CD4-positive, alpha-beta memory T cell (primary cell): ENCODE measurements at regions of chr12 and their contacts with region 1.

Region 1: DNA sequence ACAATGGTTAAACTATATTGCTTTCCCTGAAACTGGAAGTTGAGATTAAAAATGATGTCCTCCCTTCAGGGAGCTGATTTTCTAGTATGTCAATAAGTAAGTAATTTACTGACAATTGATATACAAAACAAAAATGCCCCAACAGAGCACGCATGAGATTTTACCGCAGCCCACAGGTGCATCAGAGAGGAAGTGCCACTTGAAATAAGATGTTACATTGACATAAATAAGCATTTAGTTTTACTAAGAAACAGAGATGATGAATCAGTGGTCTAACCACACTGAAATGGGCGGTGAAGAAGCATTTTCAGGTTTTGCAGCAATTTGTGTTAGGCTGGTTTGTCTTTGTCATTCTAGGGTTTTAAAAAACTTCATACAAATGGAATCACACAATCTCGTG is 8.8 kb upstream of the CLECL1 start:
- DNase-seq: peak; percentile 85 to 94 (median 91)
- H3K4me3 ChIP-seq: peak overlapping the region in 1 of 2 donors; percentile 38
- H3K4me3 Mint-ChIP-seq: peak overlapping the region; percentile 66 to 92 (median 84)
- H3K27ac ChIP-seq: peak overlapping the region; percentile 62
- H3K27ac Mint-ChIP-seq: peak overlapping the region; percentile 81 to 100 (median 99)
- H3K4me1 ChIP-seq: peaks cover 68% of the 10 kb centered on the region
- H3K4me1 Mint-ChIP-seq: peaks cover 50 to 69% (median 59%) of the 10 kb centered on the region in 4 donors
- H3K27me3 ChIP-seq: no peaks in the 10 kb centered on the region
- H3K27me3 Mint-ChIP-seq: no peaks in the 10 kb centered on the region

Region 2: DNA sequence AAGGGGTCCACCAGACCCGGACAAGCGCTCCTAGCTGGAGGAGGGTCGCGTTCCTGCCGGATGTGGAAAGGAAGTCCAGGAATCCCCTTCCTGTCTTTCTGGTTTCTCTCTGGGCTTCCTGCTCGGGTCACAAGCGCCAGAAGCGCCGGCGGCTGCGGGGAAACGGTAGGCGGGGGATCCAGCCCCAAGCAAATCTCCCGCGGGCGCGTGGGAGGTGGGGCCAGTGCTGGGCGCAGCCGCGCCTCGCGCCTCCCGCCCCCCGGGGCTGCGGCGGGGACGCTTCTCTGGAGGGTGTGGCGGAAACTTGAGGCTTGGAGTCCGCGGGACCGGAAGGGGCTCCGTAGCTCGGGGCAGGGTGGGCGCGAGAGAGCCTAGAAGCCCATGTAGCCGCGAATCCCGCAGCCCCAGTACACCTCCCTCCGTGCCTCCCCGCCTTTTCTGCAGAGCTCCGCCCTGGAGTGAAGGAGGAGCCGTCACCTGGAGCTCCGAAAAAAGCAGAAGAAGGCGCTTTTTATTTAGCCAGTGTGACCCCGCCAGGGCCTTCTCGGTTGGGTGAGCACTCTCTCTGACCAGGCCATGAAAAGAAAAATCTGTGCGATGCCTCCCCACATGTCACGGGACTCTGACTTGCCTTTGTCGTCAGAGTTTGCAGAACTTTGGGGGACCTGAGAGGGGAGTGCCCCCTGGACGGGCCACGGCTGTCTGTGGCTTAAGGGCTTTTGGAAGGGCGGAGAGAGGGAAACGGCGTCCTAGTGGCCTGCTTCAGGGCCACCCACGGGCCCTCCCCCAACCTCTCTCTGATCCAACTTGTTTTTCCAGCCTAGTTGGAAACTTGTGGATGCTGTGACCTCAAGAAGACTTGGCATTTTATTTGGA is 93.7 kb before region 1 on chr12:
- CTCF ChIA-PET with region 1: interaction called, 25 read pairs
- POLR2A ChIA-PET with region 1: interaction called, 84 read pairs
- intact Hi-C with region 1: loop called (anchors 1 kb)
- DNase-seq: peak; percentile 94 to 96 (median 94)
- H3K4me3 ChIP-seq: peak overlapping the region; percentile 91 to 99
- H3K4me3 Mint-ChIP-seq: peak overlapping the region; percentile 94 to 100 (median 99)
- H3K27ac ChIP-seq: peak overlapping the region; percentile 83
- H3K27ac Mint-ChIP-seq: peak overlapping the region; percentile 85 to 99 (median 97)
- H3K4me1 ChIP-seq: peaks cover 62% of the 10 kb centered on the region
- H3K4me1 Mint-ChIP-seq: peaks cover 39 to 66% (median 50%) of the 10 kb centered on the region in 4 donors
- H3K27me3 ChIP-seq: no peaks in the 10 kb centered on the region
- H3K27me3 Mint-ChIP-seq: no peaks in the 10 kb centered on the region

Region 3: GRCh38 chr12:9702255-9702654 is 39.5 kb before region 1 on chr12:
- CTCF ChIA-PET with region 1: interaction called, 7 read pairs
- POLR2A ChIA-PET with region 1: interaction called, 39 read pairs
- intact Hi-C with region 1: no loop called
- DNase-seq: peak; percentile 54 to 74 (median 66)
- H3K4me3 ChIP-seq: peak overlapping the region; percentile 4 to 12
- H3K4me3 Mint-ChIP-seq: peak overlapping the region; percentile 35 to 81 (median 75)
- H3K27ac ChIP-seq: peak overlapping the region; percentile 58
- H3K27ac Mint-ChIP-seq: peak overlapping the region; percentile 85 to 97 (median 93)
- H3K4me1 ChIP-seq: peaks cover 77% of the 10 kb centered on the region
- H3K4me1 Mint-ChIP-seq: peaks cover 67 to 84% (median 73%) of the 10 kb centered on the region in 4 donors
- H3K27me3 ChIP-seq: no peaks in the 10 kb centered on the region
- H3K27me3 Mint-ChIP-seq: no peaks in the 10 kb centered on the region

Region 4: DNA sequence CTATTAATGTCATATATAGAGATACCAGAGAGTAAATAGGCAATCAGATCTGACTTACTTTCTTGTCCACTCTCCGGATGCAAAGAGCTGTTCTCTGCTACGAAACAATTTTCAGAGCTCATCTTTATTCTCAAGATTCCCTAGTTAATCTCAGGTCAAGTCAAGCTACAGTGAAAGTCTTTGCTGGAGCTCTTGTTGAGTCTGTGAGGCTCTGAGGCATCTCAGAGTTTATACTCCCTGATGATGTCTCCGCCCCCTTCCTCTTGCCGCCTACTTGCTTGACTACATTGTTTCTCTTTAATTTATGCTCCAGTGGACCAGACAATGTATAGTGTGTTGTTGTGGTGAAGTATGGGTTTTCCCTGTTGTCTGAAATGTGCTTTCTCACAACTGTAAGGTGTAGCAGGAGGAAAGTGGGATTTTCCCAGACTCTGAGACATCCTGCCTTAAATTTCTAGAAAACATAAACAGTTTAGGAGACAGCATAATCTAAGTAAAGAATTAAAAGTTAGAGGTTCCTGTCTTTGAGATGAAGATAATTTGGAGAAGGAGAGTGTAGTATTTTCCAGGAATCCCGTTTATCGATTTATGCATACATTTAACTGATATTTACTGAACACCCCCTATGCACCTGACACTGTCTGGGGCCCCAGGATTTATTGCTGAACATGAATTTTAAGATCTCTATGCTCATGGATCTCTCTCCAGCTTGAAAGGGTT is 19.1 kb after region 1 on chr12 and contains the start of gene CD69:
- CTCF ChIA-PET with region 1: interaction called, 157 read pairs
- POLR2A ChIA-PET with region 1: interaction called, 189 read pairs
- intact Hi-C with region 1: loop called (anchors 1 kb)
- DNase-seq: peak; percentile 87 to 93 (median 90)
- H3K4me3 ChIP-seq: peak within 1 kb of the TSS; percentile 71 to 80
- H3K4me3 Mint-ChIP-seq: peak within 1 kb of the TSS; percentile 87 to 100 (median 98)
- H3K27ac ChIP-seq: peak within 1 kb of the TSS; percentile 98
- H3K27ac Mint-ChIP-seq: peak within 1 kb of the TSS; percentile 98 to 100 (median 100)
- H3K4me1 ChIP-seq: peaks cover 59% of the 10 kb centered on the region
- H3K4me1 Mint-ChIP-seq: peaks cover 42 to 70% (median 51%) of the 10 kb centered on the region in 4 donors
- H3K27me3 ChIP-seq: no peaks in the 10 kb centered on the region
- H3K27me3 Mint-ChIP-seq: no peaks in the 10 kb centered on the region
- total RNA-seq, gene CD69: 31.0 to 35.9 TPM

Region 5: GRCh38 chr12:9869307-9870161 is 127.8 kb after region 1 on chr12 and contains the start of gene CLEC2B:
- CTCF ChIA-PET with region 1: interaction called, 3 read pairs
- POLR2A ChIA-PET with region 1: interaction called, 26 read pairs
- intact Hi-C with region 1: no loop called
- DNase-seq: peak; percentile 58 to 74 (median 62)
- H3K4me3 ChIP-seq: peak within 1 kb of the TSS; percentile 55 to 67
- H3K4me3 Mint-ChIP-seq: peak within 1 kb of the TSS; percentile 89 to 96 (median 92)
- H3K27ac ChIP-seq: peak within 1 kb of the TSS; percentile 83
- H3K27ac Mint-ChIP-seq: peak within 1 kb of the TSS; percentile 94 to 100 (median 96)
- H3K4me1 ChIP-seq: peaks cover 15% of the 10 kb centered on the region
- H3K4me1 Mint-ChIP-seq: peaks cover 9 to 33% (median 19%) of the 10 kb centered on the region in 4 donors
- H3K27me3 ChIP-seq: no peaks in the 10 kb centered on the region
- H3K27me3 Mint-ChIP-seq: no peaks in the 10 kb centered on the region
- total RNA-seq, gene CLEC2B: 72.5 to 74.6 TPM